ENCODE measurements at regions of chr5 and their contacts with region 1.

Region 1: DNA sequence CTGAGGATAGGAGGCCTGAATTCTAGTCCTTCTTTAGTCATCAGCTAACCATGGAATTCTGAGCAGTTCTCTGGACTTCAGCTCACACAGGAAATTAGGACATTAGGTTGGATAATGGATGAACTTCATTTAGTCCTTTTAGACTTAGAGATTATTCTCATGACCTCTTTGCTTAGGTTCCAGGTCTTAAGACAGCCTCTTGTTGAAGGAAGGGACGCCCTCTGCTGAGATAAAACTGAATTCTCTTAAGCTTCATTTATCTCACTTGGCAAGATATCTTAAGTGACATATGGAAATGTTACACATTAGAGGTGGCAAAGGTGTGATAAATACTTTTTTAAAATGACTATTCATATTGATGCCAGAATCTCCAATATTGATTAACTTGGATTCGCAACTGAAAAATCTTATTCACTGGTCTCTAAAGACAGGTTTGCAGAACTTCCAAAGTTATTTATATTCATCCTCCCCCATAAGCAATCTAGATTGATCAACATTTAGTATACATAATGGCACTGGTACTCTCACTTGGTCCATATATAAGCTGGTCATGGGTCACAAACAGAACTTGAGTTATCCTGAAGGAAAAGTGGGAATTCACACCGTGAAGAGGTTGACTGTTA is 16.9 kb upstream of the ZNF366 start:
- DNase-seq: peak; percentile 78
- H3K4me3 Mint-ChIP-seq: no peak overlapping the region
- H3K27ac Mint-ChIP-seq: no peak overlapping the region
- H3K4me1 Mint-ChIP-seq: peaks cover 12% of the 10 kb centered on the region
- H3K27me3 Mint-ChIP-seq: no peaks in the 10 kb centered on the region
- CTCF ChIP-seq: peak; percentile 67

Region 2: DNA sequence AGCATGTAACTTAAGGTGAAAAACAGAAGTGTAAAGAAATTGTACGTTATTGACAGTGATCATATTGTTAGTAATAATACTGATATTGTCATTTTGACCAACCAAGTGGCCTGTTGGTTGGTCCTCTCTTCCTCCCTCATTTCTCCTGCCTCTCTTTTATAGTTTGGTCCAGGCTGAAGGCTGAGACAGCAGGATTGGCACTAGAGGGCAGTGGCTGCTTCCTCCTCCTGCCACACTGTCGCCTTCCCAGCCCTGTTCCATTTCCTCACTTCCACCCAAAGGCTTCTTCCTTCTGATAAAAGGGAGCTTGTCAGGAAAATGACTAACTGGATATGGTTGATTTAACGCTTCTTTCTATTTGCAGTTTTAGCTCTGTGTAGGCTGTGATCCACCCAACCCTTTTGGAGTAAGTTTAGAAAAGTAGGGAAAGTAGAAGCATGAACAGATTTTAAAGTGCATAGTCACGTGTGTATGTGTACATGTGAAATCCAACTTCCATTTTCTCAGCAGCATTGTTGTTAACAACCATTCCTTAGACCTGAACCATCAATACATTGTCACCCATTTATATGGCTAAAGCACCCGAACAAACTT is 168.3 kb before region 1 on chr5:
- CTCF ChIA-PET with region 1: interaction called, 31 read pairs
- POLR2A ChIA-PET with region 1: interaction called, 6 read pairs
- intact Hi-C with region 1: no loop called
- DNase-seq: peak; percentile 61
- H3K4me3 Mint-ChIP-seq: no peak overlapping the region
- H3K27ac Mint-ChIP-seq: no peak overlapping the region
- H3K4me1 Mint-ChIP-seq: peaks cover 13% of the 10 kb centered on the region
- H3K27me3 Mint-ChIP-seq: no peaks in the 10 kb centered on the region
- CTCF ChIP-seq: peak; percentile 35

Region 3: DNA sequence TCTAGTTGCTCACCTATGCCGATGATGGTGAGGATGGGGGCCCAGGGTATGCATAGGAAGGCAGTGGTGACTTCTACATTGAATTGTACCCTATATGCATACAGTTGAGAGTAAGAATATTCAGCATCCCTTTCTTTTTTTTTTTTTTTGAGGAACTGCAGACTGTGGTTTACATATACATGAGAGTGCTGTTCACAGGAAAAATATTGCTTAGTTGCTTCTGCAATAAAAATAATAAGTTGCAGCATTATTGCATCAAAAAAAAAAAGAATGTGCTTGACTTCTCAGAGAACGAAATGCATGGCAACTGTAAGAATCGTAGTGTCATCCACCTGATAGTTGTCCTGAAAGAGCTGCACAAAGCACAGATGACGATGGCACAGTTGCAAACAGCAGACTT is 151.1 kb before region 1 on chr5:
- CTCF ChIA-PET with region 1: interaction called, 124 read pairs
- POLR2A ChIA-PET with region 1: interaction called, 74 read pairs
- intact Hi-C with region 1: no loop called
- DNase-seq: no peak
- H3K4me3 Mint-ChIP-seq: no peak overlapping the region
- H3K27ac Mint-ChIP-seq: no peak overlapping the region
- H3K4me1 Mint-ChIP-seq: peaks cover 13% of the 10 kb centered on the region
- H3K27me3 Mint-ChIP-seq: no peaks in the 10 kb centered on the region
- CTCF ChIP-seq: no peak

Region 4: GRCh38 chr5:72387985-72388384 is 136.1 kb before region 1 on chr5:
- CTCF ChIA-PET with region 1: interaction called, 12 read pairs
- POLR2A ChIA-PET with region 1: interaction called, 3 read pairs
- intact Hi-C with region 1: no loop called
- DNase-seq: peak; percentile 71
- H3K4me3 Mint-ChIP-seq: peak overlapping the region; percentile 20
- H3K27ac Mint-ChIP-seq: peak overlapping the region; percentile 91
- H3K4me1 Mint-ChIP-seq: peaks cover 65% of the 10 kb centered on the region
- H3K27me3 Mint-ChIP-seq: no peaks in the 10 kb centered on the region
- CTCF ChIP-seq: no peak

Measured in MCF 10A (cell line).